Ovary (tissue), 10 donors: ENCODE measurements at regions of chr17 and their contacts with region 1.

Region 1: GRCh38 chr17:76966486-76967181 is 98.4 kb downstream of the MGAT5B start:
- DNase-seq: no peak
- H3K4me3 ChIP-seq: no peak overlapping the region
- H3K27ac ChIP-seq: no peak overlapping the region
- H3K4me1 ChIP-seq: peaks cover 2% of the 10 kb centered on the region
- H3K27me3 ChIP-seq: no peaks in the 10 kb centered on the region
- CTCF ChIP-seq: no peak
- EP300 ChIP-seq: no peak
- POLR2A ChIP-seq: no peak

Region 2: GRCh38 chr17:76948726-76949342 is 17.8 kb before region 1 on chr17:
- intact Hi-C with region 1: loop called in 1 of 4 experiments (anchors 2 kb)
- DNase-seq: no peak
- H3K4me3 ChIP-seq: no peak overlapping the region
- H3K27ac ChIP-seq: no peak overlapping the region
- H3K4me1 ChIP-seq: no peaks in the 10 kb centered on the region
- H3K27me3 ChIP-seq: no peaks in the 10 kb centered on the region
- CTCF ChIP-seq: no peak
- EP300 ChIP-seq: no peak
- POLR2A ChIP-seq: no peak